ENCODE measurements at regions of chr19 and their contacts with region 1.

Region 1: GRCh38 chr19:48321622-48322591 is 3.4 kb upstream of the EMP3 start:
- DNase-seq: peak; percentile 98
- ATAC-seq: peak; percentile 82
- H3K4me3 ChIP-seq: peak overlapping the region; percentile 54
- H3K27ac ChIP-seq: peak overlapping the region; percentile 96
- H3K4me1 ChIP-seq: peaks cover 17% of the 10 kb centered on the region
- H3K27me3 ChIP-seq: no peaks in the 10 kb centered on the region
- CTCF ChIP-seq: peak; percentile 15; the same call in 1 of the 2 replicates
- POLR2A ChIP-seq: peak; percentile 89
- RAD21 ChIP-seq: no peak

Region 2: GRCh38 chr19:48333467-48334384 is 11.8 kb after region 1 on chr19:
- CTCF ChIA-PET with region 1: interaction called, 14 read pairs
- POLR2A ChIA-PET with region 1: interaction called, 24 read pairs
- dilution Hi-C with region 1: no loop called
- in situ Hi-C with region 1: no loop called
- intact Hi-C with region 1: loop called (anchors 2 kb)
- DNase-seq: peak; percentile 91
- ATAC-seq: peak; percentile 93
- H3K4me3 ChIP-seq: peak overlapping the region; percentile 39
- H3K27ac ChIP-seq: no peak overlapping the region; the same call in 1 of the 2 replicates
- H3K4me1 ChIP-seq: peaks cover 15% of the 10 kb centered on the region
- H3K27me3 ChIP-seq: no peaks in the 10 kb centered on the region
- CTCF ChIP-seq: peak; percentile 96
- POLR2A ChIP-seq: 0 out of 2 replicates have a peak, but pooled peaks have one; percentile 18
- RAD21 ChIP-seq: peak; percentile 89

Region 3: GRCh38 chr19:48391107-48391986 is 69.4 kb after region 1 on chr19 and contains the start of gene KDELR1:
- CTCF ChIA-PET with region 1: interaction called, 4 read pairs
- POLR2A ChIA-PET with region 1: no interaction called
- dilution Hi-C with region 1: no loop called
- in situ Hi-C with region 1: no loop called
- intact Hi-C with region 1: loop called (anchors 10 kb)
- DNase-seq: peak; percentile 60
- ATAC-seq: peak; percentile 92
- H3K4me3 ChIP-seq: peak within 1 kb of the TSS; percentile 99
- H3K27ac ChIP-seq: peak within 1 kb of the TSS; percentile 99
- H3K4me1 ChIP-seq: peaks cover 7% of the 10 kb centered on the region; the same call in 1 of the 2 replicates
- H3K27me3 ChIP-seq: peaks cover 35% of the 10 kb centered on the region
- CTCF ChIP-seq: peak; percentile 92
- POLR2A ChIP-seq: no peak; the same call in 1 of the 2 replicates
- RAD21 ChIP-seq: peak; percentile 45
- total RNA-seq, gene KDELR1: 57.8 and 58.8 TPM in 2 replicates

Region 4: GRCh38 chr19:48445606-48446481 is 123.9 kb after region 1 on chr19 and contains the start of gene GRWD1:
- CTCF ChIA-PET with region 1: no interaction called
- POLR2A ChIA-PET with region 1: no interaction called
- dilution Hi-C with region 1: no loop called
- in situ Hi-C with region 1: no loop called
- intact Hi-C with region 1: loop called (anchors 1 kb)
- DNase-seq: peak; percentile 94
- ATAC-seq: peak; percentile 83
- H3K4me3 ChIP-seq: peak within 1 kb of the TSS; percentile 53
- H3K27ac ChIP-seq: peak within 1 kb of the TSS; percentile 77
- H3K4me1 ChIP-seq: peaks cover 8% of the 10 kb centered on the region
- H3K27me3 ChIP-seq: peaks cover 19% of the 10 kb centered on the region
- CTCF ChIP-seq: 0 out of 2 replicates have a peak, but pooled peaks have one; percentile 8
- POLR2A ChIP-seq: peak; percentile 72; the same call in 1 of the 2 replicates
- RAD21 ChIP-seq: no peak; the same call in 1 of the 2 replicates
- total RNA-seq, gene GRWD1: 22.0 and 32.5 TPM in 2 replicates